PC-9 (cell line): ENCODE measurements at regions of chr5 and their contacts with region 1.

Region 1: GRCh38 chr5:139968547-139969261 is 74.4 kb downstream of the NRG2 start:
- DNase-seq: peak; percentile 57 to 90
- H3K4me3 ChIP-seq: no peak overlapping the region
- H3K27ac ChIP-seq: no peak overlapping the region
- H3K4me1 ChIP-seq: no peaks in the 10 kb centered on the region
- H3K27me3 ChIP-seq: no peaks in the 10 kb centered on the region
- CTCF ChIP-seq: peak; percentile 97

Region 2: GRCh38 chr5:139422307-139422893 is 546.3 kb before region 1 on chr5:
- CTCF ChIA-PET with region 1: no interaction called
- POLR2A ChIA-PET with region 1: no interaction called
- intact Hi-C with region 1: loop called (anchors 2 kb)
- DNase-seq: peak; percentile 33 to 55
- H3K4me3 ChIP-seq: no peak overlapping the region
- H3K27ac ChIP-seq: no peak overlapping the region
- H3K4me1 ChIP-seq: no peaks in the 10 kb centered on the region
- H3K27me3 ChIP-seq: no peaks in the 10 kb centered on the region
- CTCF ChIP-seq: peak; percentile 83

Region 3: DNA sequence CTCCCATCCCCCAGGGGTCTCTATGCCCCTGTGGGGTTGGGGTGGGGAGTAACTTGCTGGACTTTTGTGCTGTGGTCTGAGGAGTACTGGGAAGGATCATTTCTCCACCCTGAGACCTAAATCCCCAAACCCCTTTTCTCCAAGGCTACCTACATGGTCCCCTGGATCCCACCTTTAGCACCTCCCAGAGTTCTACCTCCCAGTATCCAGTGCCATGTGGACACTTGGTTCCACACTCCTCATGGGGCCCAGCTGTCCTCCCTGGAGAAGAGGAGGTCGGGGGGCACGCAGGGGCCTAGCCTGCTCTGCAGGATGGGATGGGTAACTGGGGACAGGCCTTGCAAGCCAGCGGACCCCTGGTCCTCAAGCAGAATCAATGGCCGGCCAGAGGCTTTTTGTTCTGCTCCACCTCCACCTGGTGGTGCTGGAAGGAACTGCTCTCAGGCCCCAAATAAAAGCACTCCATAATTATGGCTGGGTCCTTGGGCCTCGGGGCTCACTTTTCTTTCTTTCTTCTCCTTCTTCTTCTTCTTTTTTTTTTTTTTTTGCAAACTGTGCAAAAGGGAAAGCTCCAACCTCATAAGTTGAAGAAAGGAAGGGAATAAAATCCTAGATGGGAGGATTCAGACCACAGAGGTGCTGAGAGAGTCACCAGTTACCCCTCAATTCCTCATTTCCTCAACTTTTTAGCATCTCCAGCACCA is 104.7 kb before region 1 on chr5:
- CTCF ChIA-PET with region 1: no interaction called
- POLR2A ChIA-PET with region 1: no interaction called
- intact Hi-C with region 1: loop called (anchors 10 kb)
- DNase-seq: peak in 1 of 2 experiments; percentile 48
- H3K4me3 ChIP-seq: no peak overlapping the region
- H3K27ac ChIP-seq: no peak overlapping the region
- H3K4me1 ChIP-seq: peaks cover 6% of the 10 kb centered on the region
- H3K27me3 ChIP-seq: peaks cover 4% of the 10 kb centered on the region; the same call in 1 of the 2 replicates
- CTCF ChIP-seq: peak; percentile 92

Region 4: GRCh38 chr5:140157032-140157803 is 188.5 kb after region 1 on chr5:
- CTCF ChIA-PET with region 1: no interaction called
- POLR2A ChIA-PET with region 1: no interaction called
- intact Hi-C with region 1: loop called (anchors 1 kb)
- DNase-seq: peak; percentile 58 to 80
- H3K4me3 ChIP-seq: no peak overlapping the region
- H3K27ac ChIP-seq: no peak overlapping the region
- H3K4me1 ChIP-seq: peaks cover 4% of the 10 kb centered on the region
- H3K27me3 ChIP-seq: no peaks in the 10 kb centered on the region
- CTCF ChIP-seq: peak; percentile 95